ENCODE measurements at regions of chr13 and their contacts with region 1.

Region 1: GRCh38 chr13:76418404-76418803 is 467.8 kb downstream of the KCTD12 start:
- DNase-seq: no peak
- ATAC-seq: no peak
- H3K4me3 ChIP-seq: no peak overlapping the region
- H3K4me3 Mint-ChIP-seq: no peak overlapping the region
- H3K27ac ChIP-seq: no peak overlapping the region
- H3K27ac Mint-ChIP-seq: no peak overlapping the region
- H3K4me1 ChIP-seq: no peaks in the 10 kb centered on the region
- H3K4me1 Mint-ChIP-seq: no peaks in the 10 kb centered on the region
- H3K27me3 ChIP-seq: no peaks in the 10 kb centered on the region
- H3K27me3 Mint-ChIP-seq: peaks cover 3% of the 10 kb centered on the region
- CTCF ChIP-seq: no peak

Region 2: DNA sequence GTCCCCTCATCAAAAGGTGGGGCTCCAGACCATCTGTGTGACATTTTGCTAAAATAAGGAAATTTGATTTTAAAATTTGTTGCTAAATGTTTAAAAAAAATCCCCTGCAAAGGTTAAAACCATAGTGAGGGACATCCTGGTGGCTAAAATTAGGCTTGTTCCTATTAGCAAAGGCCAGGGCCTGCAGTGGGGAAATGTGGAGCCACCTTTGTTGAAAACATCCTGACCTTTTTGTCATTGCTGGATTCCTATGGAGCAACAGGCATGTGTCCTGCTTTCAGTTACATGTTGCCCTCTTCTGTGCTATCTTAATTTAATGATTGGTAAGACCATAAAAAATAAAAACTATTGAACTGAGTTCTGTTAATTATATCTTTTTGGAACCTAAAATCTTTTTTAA is 56.5 kb before region 1 on chr13:
- CTCF ChIA-PET with region 1: no interaction called
- POLR2A ChIA-PET with region 1: no interaction called
- intact Hi-C with region 1: loop called in 1 of 2 experiments (anchors 5 kb)
- DNase-seq: no peak
- ATAC-seq: no peak
- H3K4me3 ChIP-seq: no peak overlapping the region
- H3K4me3 Mint-ChIP-seq: no peak overlapping the region
- H3K27ac ChIP-seq: no peak overlapping the region
- H3K27ac Mint-ChIP-seq: no peak overlapping the region
- H3K4me1 ChIP-seq: no peaks in the 10 kb centered on the region
- H3K4me1 Mint-ChIP-seq: no peaks in the 10 kb centered on the region
- H3K27me3 ChIP-seq: no peaks in the 10 kb centered on the region
- H3K27me3 Mint-ChIP-seq: peaks cover 2% of the 10 kb centered on the region
- CTCF ChIP-seq: no peak

Region 3: DNA sequence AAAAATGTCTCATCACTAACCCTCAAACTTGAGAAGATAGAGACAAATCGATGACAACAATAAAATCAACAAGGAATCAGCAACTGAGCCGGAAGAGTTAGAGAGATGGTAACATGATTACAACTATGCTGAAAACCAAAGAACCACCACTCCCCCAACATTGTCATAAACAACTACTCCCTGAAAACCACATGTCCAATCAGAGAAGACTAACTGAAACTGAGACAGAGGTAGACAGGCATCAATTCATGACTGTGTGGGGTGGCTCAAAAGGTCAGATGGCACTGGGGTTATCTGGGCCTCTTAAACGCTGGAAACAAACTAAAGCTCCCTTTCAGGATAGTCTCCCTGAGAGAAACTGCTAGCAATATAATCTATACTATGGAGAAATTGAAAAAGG is 21.0 kb before region 1 on chr13:
- CTCF ChIA-PET with region 1: no interaction called
- POLR2A ChIA-PET with region 1: no interaction called
- intact Hi-C with region 1: no loop called
- DNase-seq: peak in 2 of 9 experiments; percentile 23 to 33
- ATAC-seq: peak; percentile 48
- H3K4me3 ChIP-seq: no peak overlapping the region
- H3K4me3 Mint-ChIP-seq: no peak overlapping the region
- H3K27ac ChIP-seq: no peak overlapping the region
- H3K27ac Mint-ChIP-seq: peak overlapping the region; percentile 49
- H3K4me1 ChIP-seq: no peaks in the 10 kb centered on the region
- H3K4me1 Mint-ChIP-seq: no peaks in the 10 kb centered on the region
- H3K27me3 ChIP-seq: no peaks in the 10 kb centered on the region
- H3K27me3 Mint-ChIP-seq: no peaks in the 10 kb centered on the region
- CTCF ChIP-seq: no peak

Measured in CD8-positive, alpha-beta T cell (primary cell).